Aorta (tissue), 5 donors: ENCODE measurements at regions of chr1 and their contacts with region 1.

Region 1: DNA sequence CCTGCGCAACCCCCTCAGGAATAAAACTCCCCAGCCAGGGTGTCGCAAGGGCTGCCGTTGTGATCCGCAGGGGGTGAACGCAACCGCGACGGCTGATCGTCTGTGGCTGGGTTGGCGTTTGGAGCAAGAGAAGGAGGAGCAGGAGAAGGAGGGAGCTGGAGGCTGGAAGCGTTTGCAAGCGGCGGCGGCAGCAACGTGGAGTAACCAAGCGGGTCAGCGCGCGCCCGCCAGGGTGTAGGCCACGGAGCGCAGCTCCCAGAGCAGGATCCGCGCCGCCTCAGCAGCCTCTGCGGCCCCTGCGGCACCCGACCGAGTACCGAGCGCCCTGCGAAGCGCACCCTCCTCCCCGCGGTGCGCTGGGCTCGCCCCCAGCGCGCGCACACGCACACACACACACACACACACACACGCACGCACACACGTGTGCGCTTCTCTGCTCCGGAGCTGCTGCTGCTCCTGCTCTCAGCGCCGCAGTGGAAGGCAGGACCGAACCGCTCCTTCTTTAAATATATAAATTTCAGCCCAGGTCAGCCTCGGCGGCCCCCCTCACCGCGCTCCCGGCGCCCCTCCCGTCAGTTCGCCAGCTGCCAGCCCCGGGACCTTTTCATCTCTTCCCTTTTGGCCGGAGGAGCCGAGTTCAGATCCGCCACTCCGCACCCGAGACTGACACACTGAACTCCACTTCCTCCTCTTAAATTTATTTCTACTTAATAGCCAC is 696 bp downstream of the TGFB2 start:
- DNase-seq: peak; percentile 82 to 89
- ATAC-seq: peak; percentile 84
- H3K4me3 ChIP-seq: peak overlapping the region; percentile 90 to 92
- H3K27ac ChIP-seq: peak overlapping the region; percentile 63 to 96
- H3K4me1 ChIP-seq: peaks cover 0 to 2% of the 10 kb centered on the region in 2 donors
- H3K27me3 ChIP-seq: no peaks in the 10 kb centered on the region

Region 2: DNA sequence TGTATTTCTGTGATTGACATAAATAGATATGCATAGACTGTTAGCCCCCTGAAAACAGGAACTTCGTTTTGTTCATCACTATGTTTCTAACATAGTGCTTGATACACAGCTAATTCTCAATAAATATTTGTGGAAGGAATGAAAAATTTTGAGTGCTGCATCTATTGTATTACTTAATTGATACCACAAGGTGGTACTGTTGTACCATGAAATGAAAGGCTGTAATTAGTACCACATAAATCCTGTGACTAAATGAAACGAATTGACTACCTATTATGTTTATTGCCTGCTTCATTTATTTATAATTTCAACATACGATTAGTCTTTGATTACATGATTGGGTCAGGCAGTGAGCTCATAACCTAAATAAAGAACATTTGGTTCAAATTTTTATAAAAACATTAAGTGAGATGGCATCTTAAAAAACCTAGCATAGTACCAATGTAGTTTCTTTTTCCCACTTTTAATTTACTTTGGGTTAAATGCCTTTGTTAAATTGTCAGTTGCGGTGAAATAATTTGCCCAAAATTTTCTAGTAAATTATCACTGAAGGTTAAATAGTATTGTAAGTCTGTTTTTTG is 15.7 kb before region 1 on chr1:
- intact Hi-C with region 1: no loop called
- DNase-seq: no peak
- ATAC-seq: peak; percentile 76
- H3K4me3 ChIP-seq: no peak overlapping the region
- H3K27ac ChIP-seq: no peak overlapping the region
- H3K4me1 ChIP-seq: no peaks in the 10 kb centered on the region
- H3K27me3 ChIP-seq: no peaks in the 10 kb centered on the region

Region 3: DNA sequence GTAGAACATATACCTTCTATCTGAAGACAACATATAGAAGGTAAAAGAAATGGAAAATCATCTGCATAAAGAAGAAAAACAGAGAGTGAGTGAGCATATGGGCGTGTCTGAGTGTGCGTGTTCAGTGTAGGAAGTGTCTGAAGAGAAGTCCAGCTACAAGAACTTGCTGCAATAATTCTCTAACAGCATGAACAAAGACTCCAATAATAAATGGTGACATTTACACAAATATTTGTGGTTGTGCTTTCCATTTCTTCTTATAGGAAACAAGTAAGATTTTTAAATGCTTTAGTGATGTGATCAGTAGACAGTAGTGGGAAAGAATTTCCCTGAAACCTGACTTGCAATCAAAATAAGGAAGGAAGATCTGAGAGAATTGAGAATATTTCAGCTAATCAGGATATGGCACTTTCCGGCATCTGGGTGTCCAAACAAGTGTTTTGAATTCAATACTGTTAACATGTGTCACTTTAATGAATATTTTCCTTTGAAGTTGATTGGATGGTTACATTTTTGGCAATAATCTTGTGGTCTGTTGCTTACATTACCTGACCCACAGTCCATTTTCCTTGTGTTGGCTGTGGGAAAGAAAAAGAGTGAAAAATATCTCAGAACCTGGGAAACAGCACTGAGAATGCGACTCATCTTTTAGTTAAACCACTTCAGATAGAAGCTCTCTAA is 153.3 kb after region 1 on chr1:
- intact Hi-C with region 1: loop called (anchors 5 to 10 kb)
- DNase-seq: no peak
- ATAC-seq: peak; percentile 37
- H3K4me3 ChIP-seq: peak overlapping the region; percentile 22 to 61
- H3K27ac ChIP-seq: peak overlapping the region; percentile 61 to 80
- H3K4me1 ChIP-seq: peaks cover 6 to 9% of the 10 kb centered on the region in 2 donors
- H3K27me3 ChIP-seq: no peaks in the 10 kb centered on the region

Region 4: GRCh38 chr1:218665221-218665620 is 319.4 kb after region 1 on chr1:
- intact Hi-C with region 1: loop called (anchors 10 kb)
- DNase-seq: peak; percentile 75 to 86
- ATAC-seq: peak; percentile 89
- H3K4me3 ChIP-seq: no peak overlapping the region
- H3K27ac ChIP-seq: peak overlapping the region in 1 of 2 donors; percentile 28
- H3K4me1 ChIP-seq: no peaks in the 10 kb centered on the region
- H3K27me3 ChIP-seq: no peaks in the 10 kb centered on the region

Region 5: DNA sequence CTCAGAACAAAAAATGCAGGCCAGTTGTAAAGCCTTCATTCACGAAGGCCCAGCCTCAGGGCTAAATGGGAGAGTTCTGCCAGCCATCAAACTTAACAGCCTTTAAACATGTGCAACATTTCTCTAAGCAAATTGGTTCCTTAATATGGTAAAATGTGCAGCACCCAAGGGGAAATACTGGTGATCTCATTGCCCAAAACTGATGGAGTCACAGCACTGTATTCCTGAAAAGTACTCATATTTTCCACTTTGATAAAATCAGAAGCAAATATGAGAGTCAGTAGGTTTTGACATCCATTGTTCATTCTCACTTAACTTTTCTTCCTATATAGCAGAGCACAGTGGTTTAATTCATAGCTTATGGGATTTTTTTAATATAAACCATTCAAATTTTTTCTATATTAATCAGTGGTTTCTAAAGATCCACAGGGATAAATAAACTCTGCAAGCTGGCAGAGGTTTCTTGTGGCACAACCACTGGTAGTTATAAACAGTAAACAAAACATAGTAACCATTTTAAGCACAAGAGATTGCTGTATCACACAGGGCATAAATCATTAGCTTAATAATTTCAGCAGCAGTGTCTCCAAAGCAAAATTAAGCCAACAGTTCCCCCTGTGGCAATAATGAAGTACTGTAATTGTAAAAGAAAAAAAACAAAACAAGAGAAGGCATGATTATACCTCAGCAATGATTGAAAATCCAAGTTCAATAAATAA is 721.0 kb after region 1 on chr1:
- intact Hi-C with region 1: loop called in 1 of 2 experiments (anchors 10 kb)
- DNase-seq: no peak
- ATAC-seq: peak; percentile 74
- H3K4me3 ChIP-seq: no peak overlapping the region
- H3K27ac ChIP-seq: peak overlapping the region; percentile 52 to 93
- H3K4me1 ChIP-seq: peaks cover 0 to 6% of the 10 kb centered on the region in 2 donors
- H3K27me3 ChIP-seq: no peaks in the 10 kb centered on the region

Region 6: DNA sequence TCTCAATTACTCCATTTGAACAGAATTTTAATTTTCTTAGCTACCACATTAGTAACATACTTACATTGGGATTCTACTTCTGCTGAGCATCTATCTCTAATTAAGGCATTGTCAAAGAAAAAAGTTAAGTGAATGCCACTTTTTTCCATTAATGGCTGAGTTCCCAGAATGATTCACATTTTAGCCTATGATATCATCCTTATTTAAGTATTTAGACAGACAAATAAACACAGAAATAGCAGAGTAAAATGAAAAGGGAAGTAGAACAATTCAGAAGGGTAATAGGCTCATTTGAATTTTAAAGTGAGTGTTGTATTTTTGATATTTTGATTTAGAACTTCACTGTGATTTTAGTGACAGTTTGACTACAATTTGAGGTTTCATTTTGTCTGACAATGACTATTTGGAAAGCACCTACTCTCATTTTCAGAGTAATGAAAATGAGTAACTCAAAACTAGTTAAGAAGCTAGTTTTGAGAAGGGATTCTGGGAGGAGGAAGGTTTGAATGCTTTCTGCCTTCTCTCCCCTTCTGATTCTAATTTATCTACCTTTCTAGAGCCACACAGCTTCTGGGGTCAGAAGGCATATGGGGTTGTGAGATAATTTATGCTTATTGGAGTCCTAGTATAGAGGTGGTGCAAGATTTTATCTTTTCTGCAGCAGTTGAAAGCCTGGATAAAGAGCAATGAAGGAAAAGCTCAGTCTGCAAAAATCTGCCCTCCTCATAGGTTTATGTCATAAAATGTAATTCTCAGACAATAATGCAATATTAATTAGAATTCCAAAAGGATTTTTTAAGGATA is 843.4 kb after region 1 on chr1:
- intact Hi-C with region 1: loop called (anchors 5 to 10 kb)
- DNase-seq: no peak
- ATAC-seq: no peak
- H3K4me3 ChIP-seq: peak overlapping the region in 1 of 2 donors; percentile 18
- H3K27ac ChIP-seq: peak overlapping the region; percentile 48 to 96
- H3K4me1 ChIP-seq: peaks cover 2 to 3% of the 10 kb centered on the region in 2 donors
- H3K27me3 ChIP-seq: no peaks in the 10 kb centered on the region